IMR-90 (cell line): ENCODE measurements at regions of chr2 and their contacts with region 1.

Region 1: DNA sequence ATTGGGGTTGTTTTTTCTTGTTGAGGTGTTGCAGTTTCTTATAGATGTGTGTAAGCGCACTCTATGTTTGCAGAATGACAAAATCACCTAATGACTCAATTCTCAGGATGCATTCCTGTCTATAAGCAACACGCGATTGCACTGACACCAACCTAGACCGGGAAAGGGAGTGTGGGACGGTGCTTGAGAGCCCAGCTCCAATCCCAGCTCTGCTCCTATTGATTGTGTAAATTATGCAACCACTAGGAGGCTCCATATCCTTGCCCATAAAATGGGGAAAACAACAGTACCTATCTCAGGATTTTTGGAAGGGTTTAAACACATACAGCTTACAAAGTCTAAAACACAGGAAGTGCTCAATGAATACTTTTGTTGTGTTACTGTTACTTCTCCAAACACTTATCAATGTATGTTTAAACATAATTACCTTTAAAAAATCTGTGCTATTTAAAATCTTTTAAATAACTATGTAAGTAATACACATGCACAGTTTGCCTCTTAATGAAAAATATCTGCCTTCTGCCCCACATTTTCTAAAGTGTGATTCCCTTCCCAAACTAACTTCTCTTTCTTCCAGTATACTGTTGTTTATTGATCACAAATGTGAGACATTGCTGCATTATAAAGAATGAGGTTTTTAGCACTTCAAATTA is 132.5 kb downstream of the SPHKAP start:
- DNase-seq: peak; percentile 11
- ATAC-seq: 0 out of 2 replicates have a peak, but pooled peaks have one; percentile 48
- H3K4me3 ChIP-seq: no peak overlapping the region
- H3K27ac ChIP-seq: no peak overlapping the region
- H3K4me1 ChIP-seq: no peaks in the 10 kb centered on the region
- H3K27me3 ChIP-seq: no peaks in the 10 kb centered on the region
- CTCF ChIP-seq: peak; percentile 34
- POLR2A ChIP-seq: no peak
- RAD21 ChIP-seq: peak; percentile 19; the same call in 1 of the 2 replicates

Region 2: GRCh38 chr2:227996366-227996765 is 52.6 kb before region 1 on chr2:
- CTCF ChIA-PET with region 1: no interaction called
- POLR2A ChIA-PET with region 1: no interaction called
- dilution Hi-C with region 1: no loop called
- in situ Hi-C with region 1: no loop called
- intact Hi-C with region 1: no loop called
- DNase-seq: no peak
- ATAC-seq: no peak
- H3K4me3 ChIP-seq: no peak overlapping the region
- H3K27ac ChIP-seq: no peak overlapping the region
- H3K4me1 ChIP-seq: no peaks in the 10 kb centered on the region
- H3K27me3 ChIP-seq: no peaks in the 10 kb centered on the region
- CTCF ChIP-seq: no peak
- POLR2A ChIP-seq: no peak
- RAD21 ChIP-seq: no peak

Region 3: GRCh38 chr2:228016402-228016801 is 32.6 kb before region 1 on chr2:
- CTCF ChIA-PET with region 1: no interaction called
- POLR2A ChIA-PET with region 1: no interaction called
- dilution Hi-C with region 1: no loop called
- in situ Hi-C with region 1: no loop called
- intact Hi-C with region 1: no loop called
- DNase-seq: no peak
- ATAC-seq: no peak
- H3K4me3 ChIP-seq: no peak overlapping the region
- H3K27ac ChIP-seq: no peak overlapping the region
- H3K4me1 ChIP-seq: no peaks in the 10 kb centered on the region
- H3K27me3 ChIP-seq: no peaks in the 10 kb centered on the region
- CTCF ChIP-seq: no peak
- POLR2A ChIP-seq: no peak
- RAD21 ChIP-seq: no peak

Region 4: DNA sequence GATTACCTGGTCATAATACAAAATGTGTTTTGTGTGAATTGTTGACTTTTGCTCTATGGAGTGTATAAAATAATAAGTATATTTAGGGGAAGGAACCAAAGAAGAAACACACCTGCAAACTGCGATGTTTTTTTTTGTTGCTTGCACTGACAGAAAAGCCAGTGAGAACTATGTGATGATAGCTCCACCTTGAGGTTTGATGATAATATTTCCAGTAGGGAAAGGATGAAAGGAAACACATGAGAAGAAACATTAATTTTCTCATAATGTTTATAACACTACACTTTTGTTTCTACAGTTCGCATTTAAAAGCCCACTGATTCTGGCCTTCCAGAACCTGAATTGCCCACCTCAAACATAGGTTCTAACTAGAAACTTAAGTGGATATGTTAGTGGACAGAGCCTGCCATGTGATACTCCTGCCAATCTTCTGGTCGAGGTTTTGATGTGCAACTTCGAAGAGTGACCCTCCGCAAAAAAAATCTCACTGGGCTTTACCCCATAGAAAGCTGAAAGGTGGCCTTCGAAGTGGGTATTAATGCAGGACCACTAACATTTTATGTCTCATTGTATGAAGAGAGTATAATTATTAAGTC is 608.9 kb after region 1 on chr2:
- CTCF ChIA-PET with region 1: no interaction called
- POLR2A ChIA-PET with region 1: no interaction called
- dilution Hi-C with region 1: no loop called
- in situ Hi-C with region 1: no loop called
- intact Hi-C with region 1: loop called (anchors 2 kb)
- DNase-seq: peak; percentile 46
- ATAC-seq: peak; percentile 21; the same call in 1 of the 2 replicates
- H3K4me3 ChIP-seq: no peak overlapping the region
- H3K27ac ChIP-seq: no peak overlapping the region
- H3K4me1 ChIP-seq: no peaks in the 10 kb centered on the region
- H3K27me3 ChIP-seq: no peaks in the 10 kb centered on the region
- CTCF ChIP-seq: peak; percentile 51
- POLR2A ChIP-seq: no peak
- RAD21 ChIP-seq: peak; percentile 67